Heart right ventricle (tissue), 16 donors: ENCODE measurements at regions of chr1 and their contacts with region 1.

Region 1: DNA sequence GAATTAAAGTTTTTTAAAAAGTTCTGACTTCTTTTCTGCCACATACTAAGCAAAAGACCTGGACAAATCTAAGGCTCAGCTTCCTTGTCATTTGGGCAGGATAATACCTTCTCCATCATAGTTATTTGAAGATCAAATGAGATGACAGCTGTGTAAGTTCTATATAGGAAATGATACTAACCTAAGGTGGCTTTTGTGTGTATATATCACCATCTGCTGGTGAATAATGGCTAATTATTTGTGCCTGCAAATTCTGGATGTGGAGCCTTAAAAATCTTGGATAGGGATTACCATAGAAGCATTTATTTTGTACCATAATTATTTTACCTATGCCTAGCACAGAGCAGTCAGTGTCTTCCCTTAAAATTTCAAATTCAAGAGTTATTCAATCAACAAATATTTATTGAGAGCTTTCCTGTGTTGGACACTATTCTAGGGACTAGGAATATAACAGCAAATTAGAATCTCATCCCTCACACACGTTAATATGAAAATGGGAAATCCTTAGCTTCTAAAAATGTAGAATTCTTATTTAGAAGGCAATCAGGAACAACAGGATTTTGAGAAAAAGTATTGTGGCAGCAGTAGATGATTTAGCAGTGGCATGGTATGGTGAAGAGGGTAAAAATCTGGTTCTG is 89.8 kb downstream of the TMEM200B start:
- DNase-seq: no peak
- ATAC-seq: peak in 3 of 8 donors; percentile 47 to 65 (median 55)
- H3K4me3 ChIP-seq: no peak overlapping the region
- H3K27ac ChIP-seq: no peak overlapping the region
- H3K4me1 ChIP-seq: peaks cover 0 to 13% (median 0%) of the 10 kb centered on the region in 9 donors
- H3K27me3 ChIP-seq: no peaks in the 10 kb centered on the region
- CTCF ChIP-seq: peak; percentile 30 to 80 (median 72)

Region 2: DNA sequence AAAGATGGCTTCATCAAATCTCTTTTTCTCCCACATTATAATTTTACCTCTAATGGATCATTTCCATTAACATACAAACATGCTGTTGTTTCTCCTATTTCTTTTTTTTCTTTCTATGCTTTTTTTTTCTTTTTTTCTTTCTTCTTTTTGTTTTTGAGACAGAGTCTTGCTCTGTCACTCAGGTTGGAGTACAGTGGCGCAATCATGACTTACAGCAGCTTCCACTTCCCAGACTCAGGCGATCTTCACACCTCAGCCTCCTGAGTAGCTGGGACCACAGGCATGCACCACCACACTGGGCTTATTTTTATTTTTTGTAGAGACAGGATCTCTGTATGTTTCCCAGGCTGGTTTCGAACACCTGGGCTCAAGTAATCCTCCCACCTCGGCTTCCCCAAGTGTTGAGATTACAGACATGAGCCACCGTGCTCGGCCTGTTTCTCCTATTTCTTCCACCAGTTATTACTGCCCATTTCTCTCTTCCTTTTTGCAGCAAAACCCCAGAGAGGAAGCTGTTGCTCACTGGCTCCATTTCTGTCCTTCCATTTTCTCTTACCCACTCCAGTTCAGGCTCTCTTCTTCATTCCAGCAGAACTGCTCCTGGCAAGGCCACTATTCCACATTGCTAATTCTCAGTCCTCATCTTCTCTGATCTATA is 254.1 kb before region 1 on chr1:
- intact Hi-C with region 1: loop called in 8 of 10 experiments (anchors 5 to 10 kb)
- DNase-seq: no peak
- ATAC-seq: no peak
- H3K4me3 ChIP-seq: no peak overlapping the region
- H3K27ac ChIP-seq: no peak overlapping the region
- H3K4me1 ChIP-seq: peaks cover 0 to 13% (median 7%) of the 10 kb centered on the region in 9 donors
- H3K27me3 ChIP-seq: no peaks in the 10 kb centered on the region
- CTCF ChIP-seq: no peak

Region 3: GRCh38 chr1:28792644-28793121 is 241.3 kb before region 1 on chr1:
- intact Hi-C with region 1: loop called in 9 of 10 experiments (anchors 5 to 10 kb)
- DNase-seq: no peak
- ATAC-seq: peak in 2 of 8 donors; percentile 56 to 74
- H3K4me3 ChIP-seq: no peak overlapping the region
- H3K27ac ChIP-seq: no peak overlapping the region
- H3K4me1 ChIP-seq: peaks cover 0 to 11% (median 0%) of the 10 kb centered on the region in 9 donors
- H3K27me3 ChIP-seq: peaks cover 0 to 4% (median 0%) of the 10 kb centered on the region in 7 donors
- CTCF ChIP-seq: peak in 2 of 9 donors; percentile 8 to 38

Region 4: GRCh38 chr1:28886731-28887418 is 147.1 kb before region 1 on chr1:
- intact Hi-C with region 1: loop called (anchors 1 to 5 kb)
- DNase-seq: peak; percentile 80 to 86
- ATAC-seq: peak; percentile 79 to 89 (median 84)
- H3K4me3 ChIP-seq: peak overlapping the region; percentile 53 to 99 (median 88)
- H3K27ac ChIP-seq: peak overlapping the region; percentile 34 to 93 (median 86)
- H3K4me1 ChIP-seq: peaks cover 0 to 45% (median 16%) of the 10 kb centered on the region in 9 donors
- H3K27me3 ChIP-seq: peaks cover 0 to 6% (median 0%) of the 10 kb centered on the region in 7 donors
- CTCF ChIP-seq: no peak

Region 5: DNA sequence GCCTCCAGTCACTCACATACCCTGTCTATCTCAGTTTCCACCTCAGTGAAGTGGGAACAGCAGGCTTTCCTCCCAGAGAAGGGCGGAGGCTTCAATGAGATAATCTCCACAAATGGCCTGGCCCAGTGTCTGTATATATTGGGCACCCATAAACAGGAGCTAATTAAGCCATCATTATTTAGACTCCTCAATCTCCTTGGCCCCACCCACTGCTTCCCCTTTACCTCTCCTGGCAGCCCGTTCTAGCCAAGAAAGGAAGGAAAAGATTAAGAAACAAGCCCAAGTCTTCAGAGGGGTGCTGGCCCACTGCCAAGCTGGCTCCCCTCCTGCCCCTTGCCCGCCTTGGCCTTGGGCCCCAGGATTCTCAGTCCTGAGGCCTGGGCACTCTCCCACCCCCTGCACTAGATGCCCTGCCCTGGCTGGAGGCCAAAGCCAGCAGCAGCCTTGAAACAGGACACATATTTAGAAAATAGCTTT is 135.5 kb before region 1 on chr1:
- intact Hi-C with region 1: loop called in 1 of 10 experiments (anchors 5 kb)
- DNase-seq: peak in 1 of 2 donors; percentile 49
- ATAC-seq: peak in 3 of 8 donors; percentile 23 to 64 (median 23)
- H3K4me3 ChIP-seq: no peak overlapping the region
- H3K27ac ChIP-seq: peak overlapping the region in 1 of 10 donors; percentile 26
- H3K4me1 ChIP-seq: peaks cover 6 to 40% (median 20%) of the 10 kb centered on the region in 9 donors
- H3K27me3 ChIP-seq: no peaks in the 10 kb centered on the region
- CTCF ChIP-seq: no peak